Psoas muscle (tissue), 8 donors: ENCODE measurements at regions of chr4 and their contacts with region 1.

Region 1: GRCh38 chr4:123826896-123827295 is 430.3 kb downstream of the SPRY1 start:
- DNase-seq: peak in 1 of 2 donors; percentile 35
- ATAC-seq: peak; percentile 60 to 81 (median 72)
- H3K4me3 ChIP-seq: no peak overlapping the region
- H3K27ac ChIP-seq: peak overlapping the region; percentile 52
- H3K4me1 ChIP-seq: peaks cover 14% of the 10 kb centered on the region
- H3K27me3 ChIP-seq: no peaks in the 10 kb centered on the region
- CTCF ChIP-seq: no peak

Region 2: GRCh38 chr4:123564758-123565346 is 262.0 kb before region 1 on chr4:
- intact Hi-C with region 1: no loop called
- DNase-seq: no peak
- ATAC-seq: peak; percentile 89 to 98 (median 94)
- H3K4me3 ChIP-seq: no peak overlapping the region
- H3K27ac ChIP-seq: no peak overlapping the region
- H3K4me1 ChIP-seq: no peaks in the 10 kb centered on the region
- H3K27me3 ChIP-seq: no peaks in the 10 kb centered on the region
- CTCF ChIP-seq: peak; percentile 80

Region 3: DNA sequence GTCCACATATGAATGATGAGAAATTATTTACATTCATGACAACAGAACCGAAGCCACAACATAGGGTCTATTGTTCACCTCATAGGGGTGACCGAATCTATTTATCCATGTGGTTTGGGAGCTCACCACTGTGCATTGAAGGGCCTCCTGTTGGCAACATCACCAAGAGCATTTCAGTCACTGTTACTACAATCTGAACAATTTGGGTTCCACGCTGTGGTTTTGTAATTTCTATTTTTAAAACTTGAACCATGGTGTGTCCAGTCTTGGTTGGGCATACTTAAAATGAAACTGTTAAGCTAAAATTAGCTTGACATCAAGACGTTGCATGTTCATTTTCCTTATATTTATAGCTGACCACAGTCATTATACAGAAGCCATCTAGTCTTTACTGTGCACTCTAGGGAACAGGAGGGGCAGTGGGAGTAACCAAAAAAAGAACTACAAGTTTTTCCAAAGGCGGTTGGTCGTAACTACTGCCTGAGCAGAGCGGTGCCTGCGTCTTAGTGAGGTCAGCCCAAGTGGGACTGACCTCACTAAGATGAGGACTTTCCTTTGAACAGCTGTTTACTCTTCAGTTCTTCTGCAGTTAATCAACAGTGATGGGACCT is 238.2 kb before region 1 on chr4:
- intact Hi-C with region 1: loop called in 1 of 2 experiments (anchors 5 kb)
- DNase-seq: peak in 1 of 2 donors; percentile 50
- ATAC-seq: peak; percentile 87 to 93 (median 91)
- H3K4me3 ChIP-seq: peak overlapping the region; percentile 26
- H3K27ac ChIP-seq: peak overlapping the region; percentile 96
- H3K4me1 ChIP-seq: peaks cover 13% of the 10 kb centered on the region
- H3K27me3 ChIP-seq: no peaks in the 10 kb centered on the region
- CTCF ChIP-seq: no peak

Region 4: DNA sequence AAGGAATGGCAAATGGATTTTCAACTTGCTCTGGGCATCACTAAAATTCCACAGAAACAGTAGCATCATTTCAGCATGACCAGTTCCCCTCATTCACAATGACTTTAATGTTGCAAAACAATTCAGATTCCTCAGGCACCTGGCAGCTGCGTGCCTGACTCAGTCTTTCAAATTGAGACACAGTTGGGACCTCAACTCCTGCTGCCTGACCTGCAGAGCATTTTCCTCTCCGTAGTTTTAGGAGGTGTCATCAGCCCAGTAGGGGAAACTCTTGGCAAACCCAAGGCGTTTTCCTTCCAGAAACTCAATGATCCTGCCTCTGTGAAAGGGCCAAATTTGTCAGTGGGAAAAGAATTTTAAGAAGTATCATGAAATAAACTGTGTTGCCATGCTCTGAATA is 41.4 kb before region 1 on chr4:
- intact Hi-C with region 1: loop called in 1 of 2 experiments (anchors 5 kb)
- DNase-seq: peak; percentile 83 to 87
- ATAC-seq: peak; percentile 82 to 96 (median 96)
- H3K4me3 ChIP-seq: peak overlapping the region; percentile 39
- H3K27ac ChIP-seq: peak overlapping the region; percentile 86
- H3K4me1 ChIP-seq: peaks cover 41% of the 10 kb centered on the region
- H3K27me3 ChIP-seq: no peaks in the 10 kb centered on the region
- CTCF ChIP-seq: no peak